GM12878 (cell line): ENCODE measurements at regions of chr1 and their contacts with region 1.

Region 1: GRCh38 chr1:12196641-12197482 is 30.1 kb downstream of the TNFRSF1B start:
- DNase-seq: no peak
- ATAC-seq: peak; percentile 37
- H3K4me3 ChIP-seq: no peak overlapping the region
- H3K27ac ChIP-seq: peak overlapping the region; percentile 9; the same call in 1 of the 2 replicates
- H3K4me1 ChIP-seq: peaks cover 40% of the 10 kb centered on the region
- H3K27me3 ChIP-seq: no peaks in the 10 kb centered on the region
- CTCF ChIP-seq: peak in 2 of 3 experiments; percentile 15 to 34; a peak in 3 of 6 replicates
- EP300 ChIP-seq: no peak
- POLR2A ChIP-seq: no peak
- RAD21 ChIP-seq: no peak

Region 2: DNA sequence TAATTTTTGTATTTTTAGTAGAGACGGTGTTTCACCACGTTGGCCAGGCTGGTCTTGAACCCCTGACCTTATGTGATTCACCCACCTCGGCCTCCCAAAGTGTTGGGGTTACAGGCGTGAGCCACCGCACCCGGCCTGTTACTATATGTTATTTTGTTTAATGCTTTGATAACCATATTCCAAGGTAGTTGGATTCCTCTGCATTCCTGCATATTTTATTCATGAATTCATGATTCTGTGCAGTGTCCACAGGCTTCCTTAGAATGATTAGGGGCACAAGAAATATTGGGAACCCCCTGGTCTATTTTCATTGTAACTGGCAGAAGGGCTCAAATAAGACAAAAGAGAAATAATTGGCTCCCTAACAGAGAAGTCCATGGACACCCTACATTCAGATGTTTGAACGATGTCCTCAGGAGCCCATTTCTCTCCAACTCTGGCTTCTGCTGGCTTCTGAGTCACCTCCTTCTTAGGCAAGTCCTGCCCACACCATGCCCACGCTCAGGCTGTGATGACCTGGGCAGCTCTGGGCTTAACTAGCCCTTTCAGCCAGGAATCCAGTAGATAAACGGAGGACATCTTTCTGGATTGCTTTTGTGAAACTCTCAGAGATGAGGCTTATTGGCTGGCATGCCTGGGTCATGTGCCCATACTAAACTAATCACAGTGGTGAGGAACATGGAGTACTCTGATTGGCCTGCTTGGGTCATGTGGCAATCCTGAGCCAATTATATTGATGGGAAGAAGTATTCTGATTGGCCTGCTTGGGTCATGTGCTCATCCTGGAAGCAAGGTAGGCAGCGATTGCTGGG is 101.2 kb before region 1 on chr1:
- CTCF ChIA-PET with region 1: no interaction called
- POLR2A ChIA-PET with region 1: no interaction called
- RAD21 ChIA-PET with region 1: no interaction called
- SMC1A ChIA-PET with region 1: no interaction called
- in situ Hi-C with region 1: no loop called
- intact Hi-C with region 1: no loop called
- DNase-seq: no peak
- ATAC-seq: peak; percentile 94
- H3K4me3 ChIP-seq: no peak overlapping the region
- H3K27ac ChIP-seq: no peak overlapping the region
- H3K4me1 ChIP-seq: no peaks in the 10 kb centered on the region
- H3K27me3 ChIP-seq: no peaks in the 10 kb centered on the region
- CTCF ChIP-seq: no peak
- EP300 ChIP-seq: no peak
- POLR2A ChIP-seq: no peak
- RAD21 ChIP-seq: no peak

Region 3: DNA sequence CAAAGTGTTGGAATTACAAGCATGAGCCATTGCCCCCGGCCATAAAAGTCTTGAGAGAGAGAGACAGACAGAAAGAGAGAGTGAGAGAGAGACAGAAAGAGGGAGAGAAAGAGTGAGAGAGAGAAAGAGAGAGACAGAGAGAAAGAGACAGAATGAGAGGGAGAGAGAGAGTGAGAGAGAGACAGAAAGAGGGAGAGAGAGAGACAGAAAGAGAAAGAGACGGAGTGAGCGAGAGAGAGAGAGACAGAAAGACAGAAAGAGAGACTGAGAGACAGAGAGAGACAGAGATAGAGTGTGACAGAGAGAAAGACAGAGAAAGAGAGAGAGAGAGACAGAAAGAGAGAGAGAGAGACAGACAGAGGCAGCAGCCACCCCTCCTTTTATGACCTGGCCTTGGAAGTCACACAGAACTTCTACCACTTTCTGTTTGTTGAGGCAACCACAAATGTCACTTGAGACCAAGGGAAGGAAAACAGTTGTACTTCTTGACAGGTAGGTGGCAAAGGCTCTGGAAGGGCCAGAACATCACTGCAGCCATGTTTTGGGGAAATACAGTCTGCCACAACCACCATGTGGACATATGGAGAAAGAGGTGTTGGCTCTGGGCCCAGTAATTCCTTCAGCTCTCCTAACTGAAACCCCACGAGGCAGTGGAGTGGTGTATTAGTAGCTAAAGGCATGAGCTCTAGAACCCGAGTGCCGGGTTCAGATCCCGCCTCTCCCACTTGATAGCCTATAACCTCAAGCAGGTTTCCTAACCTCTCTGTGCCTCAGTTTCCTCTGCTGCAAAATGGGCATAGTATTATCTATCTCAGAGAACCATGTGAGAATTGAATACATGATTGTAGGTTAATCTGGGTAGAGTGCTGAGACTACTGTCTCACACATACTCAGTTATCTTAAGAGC is 83.2 kb before region 1 on chr1:
- CTCF ChIA-PET with region 1: no interaction called
- POLR2A ChIA-PET with region 1: no interaction called
- RAD21 ChIA-PET with region 1: no interaction called
- SMC1A ChIA-PET with region 1: no interaction called
- in situ Hi-C with region 1: no loop called
- intact Hi-C with region 1: no loop called
- DNase-seq: no peak
- ATAC-seq: no peak
- H3K4me3 ChIP-seq: no peak overlapping the region
- H3K27ac ChIP-seq: no peak overlapping the region
- H3K4me1 ChIP-seq: no peaks in the 10 kb centered on the region
- H3K27me3 ChIP-seq: no peaks in the 10 kb centered on the region
- CTCF ChIP-seq: no peak
- EP300 ChIP-seq: no peak
- POLR2A ChIP-seq: no peak
- RAD21 ChIP-seq: no peak

Region 4: DNA sequence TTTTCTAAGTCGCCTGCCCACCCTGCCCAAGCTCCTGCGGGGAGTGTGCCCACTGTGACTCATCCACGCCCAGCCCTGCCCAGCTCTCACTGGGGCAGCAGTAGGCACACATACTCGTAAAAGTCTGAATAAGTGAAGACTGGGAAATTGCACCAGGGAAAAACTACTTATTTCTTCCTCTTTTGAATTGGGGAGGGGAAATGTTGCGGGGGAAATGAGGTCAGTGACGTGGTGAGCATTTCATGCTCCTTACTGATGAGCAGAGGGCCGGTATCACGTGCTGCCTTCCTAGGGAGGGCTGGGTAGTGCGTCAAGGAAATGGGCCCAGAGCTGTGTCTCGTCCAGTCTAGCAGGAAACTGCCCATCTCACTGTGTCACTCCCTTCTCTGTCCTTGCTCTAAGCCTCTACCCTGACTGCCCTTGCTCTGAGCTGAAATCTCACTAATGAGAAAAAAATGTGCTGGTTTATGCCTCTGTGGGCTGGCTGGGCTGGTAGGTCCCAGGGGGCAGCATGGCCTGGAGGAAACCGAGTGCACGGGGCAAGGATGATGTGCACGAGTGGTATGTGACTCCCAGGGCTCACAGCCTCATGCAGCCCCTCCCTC is 43.6 kb before region 1 on chr1:
- CTCF ChIA-PET with region 1: interaction called, 6 read pairs
- POLR2A ChIA-PET with region 1: interaction called, 53 read pairs
- RAD21 ChIA-PET with region 1: interaction called, 116 read pairs
- SMC1A ChIA-PET with region 1: interaction called, 15 read pairs
- in situ Hi-C with region 1: no loop called
- intact Hi-C with region 1: no loop called
- DNase-seq: peak; percentile 78
- ATAC-seq: peak; percentile 68
- H3K4me3 ChIP-seq: no peak overlapping the region
- H3K27ac ChIP-seq: peak overlapping the region; percentile 84
- H3K4me1 ChIP-seq: peaks cover 76% of the 10 kb centered on the region
- H3K27me3 ChIP-seq: no peaks in the 10 kb centered on the region
- CTCF ChIP-seq: no peak
- EP300 ChIP-seq: 0 out of 4 replicates have a peak, but pooled peaks of 1 of the 2 experiments have one; percentile 6
- POLR2A ChIP-seq: 0 out of 2 replicates have a peak, but pooled peaks have one; percentile 40
- RAD21 ChIP-seq: no peak

Region 5: DNA sequence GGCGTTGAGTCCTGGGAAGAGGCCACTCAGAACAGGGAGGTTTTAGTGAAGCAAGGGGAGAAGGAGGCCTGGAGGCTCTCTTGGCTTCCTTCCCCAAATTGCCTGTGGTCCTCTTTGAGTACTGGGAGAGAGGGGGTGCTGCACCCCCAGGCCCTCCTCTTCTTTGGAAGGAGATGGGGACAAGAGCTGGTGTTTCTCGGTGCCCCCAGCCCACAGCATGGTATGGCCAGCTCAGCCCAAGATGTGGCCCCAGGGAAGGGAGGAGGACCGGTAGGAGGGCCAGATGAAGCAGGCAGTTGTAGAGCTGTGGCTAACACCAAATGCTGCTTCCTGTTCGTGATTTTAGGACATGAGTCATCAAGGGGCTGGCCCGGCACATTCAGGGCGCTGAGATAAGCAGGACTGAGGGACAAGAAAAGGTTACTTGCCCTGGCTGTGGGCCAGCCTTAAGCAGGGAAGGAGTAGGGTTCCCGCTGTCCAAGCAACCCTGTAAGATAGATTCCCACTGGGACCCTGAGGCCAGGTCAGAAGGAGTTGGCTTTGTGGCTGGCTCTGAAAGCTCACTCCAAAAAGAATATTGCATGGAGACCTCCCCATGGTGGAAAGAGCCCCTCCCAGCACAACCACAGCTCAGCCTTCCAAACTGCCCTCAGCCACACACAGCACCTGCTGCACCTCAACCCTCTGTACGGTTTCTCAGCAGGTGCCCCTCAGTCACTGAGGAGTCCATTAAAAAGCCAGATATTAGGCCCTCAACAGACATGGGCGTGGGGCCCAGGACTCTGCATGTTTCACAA is 35.0 kb before region 1 on chr1:
- CTCF ChIA-PET with region 1: interaction called, 4 read pairs
- POLR2A ChIA-PET with region 1: interaction called, 7 read pairs
- RAD21 ChIA-PET with region 1: interaction called, 8 read pairs
- SMC1A ChIA-PET with region 1: interaction called, 6 read pairs
- in situ Hi-C with region 1: no loop called
- intact Hi-C with region 1: loop called (anchors 5 kb)
- DNase-seq: peak; percentile 88
- ATAC-seq: peak; percentile 87
- H3K4me3 ChIP-seq: no peak overlapping the region
- H3K27ac ChIP-seq: peak overlapping the region; percentile 89
- H3K4me1 ChIP-seq: peaks cover 79% of the 10 kb centered on the region
- H3K27me3 ChIP-seq: no peaks in the 10 kb centered on the region
- CTCF ChIP-seq: no peak
- EP300 ChIP-seq: peak; percentile 77 to 88; a peak in 3 of 4 replicates
- POLR2A ChIP-seq: peak; percentile 69
- RAD21 ChIP-seq: no peak

Region 6: GRCh38 chr1:12166834-12167492 is 29.9 kb before region 1 on chr1 and contains the start of gene TNFRSF1B:
- CTCF ChIA-PET with region 1: interaction called, 4 read pairs
- POLR2A ChIA-PET with region 1: interaction called, 7 read pairs
- RAD21 ChIA-PET with region 1: interaction called, 8 read pairs
- SMC1A ChIA-PET with region 1: interaction called, 11 read pairs
- in situ Hi-C with region 1: no loop called
- intact Hi-C with region 1: loop called (anchors 5 kb)
- DNase-seq: no peak
- ATAC-seq: peak; percentile 72
- H3K4me3 ChIP-seq: peak within 1 kb of the TSS; percentile 91
- H3K27ac ChIP-seq: peak within 1 kb of the TSS; percentile 82
- H3K4me1 ChIP-seq: peaks cover 47% of the 10 kb centered on the region
- H3K27me3 ChIP-seq: no peaks in the 10 kb centered on the region
- CTCF ChIP-seq: no peak
- EP300 ChIP-seq: no peak
- POLR2A ChIP-seq: peak; percentile 98
- RAD21 ChIP-seq: no peak
- polyA plus RNA-seq, gene TNFRSF1B: 10.1 to 11.6 TPM

Region 7: GRCh38 chr1:12184008-12184681 is 12.7 kb before region 1 on chr1:
- CTCF ChIA-PET with region 1: interaction called, 10 read pairs
- POLR2A ChIA-PET with region 1: interaction called, 3 read pairs
- RAD21 ChIA-PET with region 1: interaction called, 8 read pairs
- SMC1A ChIA-PET with region 1: interaction called, 7 read pairs
- in situ Hi-C with region 1: no loop called
- intact Hi-C with region 1: no loop called
- DNase-seq: no peak
- ATAC-seq: peak; percentile 76
- H3K4me3 ChIP-seq: no peak overlapping the region; the same call in 1 of the 2 replicates
- H3K27ac ChIP-seq: peak overlapping the region; percentile 47
- H3K4me1 ChIP-seq: peaks cover 20% of the 10 kb centered on the region
- H3K27me3 ChIP-seq: no peaks in the 10 kb centered on the region
- CTCF ChIP-seq: 0 out of 6 replicates have a peak, but pooled peaks of 1 of the 3 experiments have one; percentile 11
- EP300 ChIP-seq: no peak
- POLR2A ChIP-seq: no peak
- RAD21 ChIP-seq: 0 out of 2 replicates have a peak, but pooled peaks have one; percentile 29